Left colon (tissue), 2 donors: ENCODE measurements at regions of chr3 and their contacts with region 1.

Region 1: GRCh38 chr3:138915503-138916498 is 31.1 kb downstream of the FOXL2 start:
- DNase-seq: peak; percentile 89 to 96
- ATAC-seq: peak; percentile 85

Region 2: GRCh38 chr3:138594150-138594934 is 321.5 kb before region 1 on chr3 and contains the start of gene CEP70:
- intact Hi-C with region 1: loop called in 1 of 2 experiments (anchors 5 kb)
- DNase-seq: peak; percentile 97
- ATAC-seq: peak; percentile 87
- total RNA-seq, gene CEP70: 35.8 to 36.4 TPM

Region 3: DNA sequence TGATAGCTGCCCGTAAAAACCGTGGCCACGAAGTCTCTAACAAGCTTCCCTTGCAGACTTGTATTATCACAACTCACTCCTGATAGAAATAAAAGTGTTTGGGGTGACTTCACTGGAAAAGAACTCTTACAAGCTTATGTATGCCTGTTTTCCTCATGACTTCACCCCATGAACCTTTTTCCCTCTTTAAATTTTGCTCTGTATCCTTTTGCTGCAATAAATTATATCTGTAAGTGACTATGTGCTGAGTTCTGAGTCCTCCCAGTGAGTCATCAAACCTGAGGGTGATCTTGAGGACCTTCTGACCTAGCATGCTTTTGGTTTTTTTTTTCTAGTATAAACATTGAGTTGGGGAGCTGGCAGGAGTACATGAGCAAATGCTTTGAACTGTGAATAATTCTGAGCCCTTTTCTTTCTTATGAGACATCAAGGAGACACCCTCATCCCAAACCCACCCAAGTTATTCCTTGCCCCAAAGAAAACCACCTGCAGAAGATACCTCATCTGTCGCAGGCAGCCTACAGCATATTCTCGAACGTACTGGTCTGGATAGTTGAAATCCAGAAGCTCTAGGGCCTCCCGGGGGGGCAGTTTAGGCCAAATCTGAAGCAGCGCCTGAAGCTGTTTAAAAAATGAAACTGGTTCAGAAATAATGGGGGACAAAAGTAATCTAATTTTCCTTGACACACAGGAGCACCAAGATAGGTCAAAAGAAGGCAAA is 221.4 kb before region 1 on chr3:
- intact Hi-C with region 1: loop called (anchors 2 to 10 kb)
- DNase-seq: no peak
- ATAC-seq: peak; percentile 31

Region 4: DNA sequence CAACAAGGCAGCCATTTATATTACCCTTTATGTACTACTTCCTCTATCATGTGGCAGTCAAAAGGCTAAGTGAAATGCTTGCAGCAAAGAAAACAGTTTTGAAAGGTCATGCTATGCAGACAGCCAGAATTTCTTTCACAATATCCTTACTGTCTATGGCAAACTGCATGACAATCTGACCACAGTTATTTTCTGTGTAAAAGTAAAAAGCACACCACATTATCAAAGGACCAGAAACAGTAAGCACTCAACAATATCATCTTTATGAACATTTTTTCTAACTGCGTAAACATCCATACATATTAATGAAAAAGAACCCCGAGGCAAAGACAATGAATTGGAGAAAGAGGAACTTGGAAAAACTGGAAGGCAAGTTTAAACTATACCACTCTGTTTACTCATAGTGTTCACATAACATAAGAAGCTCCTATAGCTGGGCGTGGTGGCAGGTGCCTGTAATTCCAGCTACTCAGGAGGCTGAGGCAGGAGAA is 129.0 kb before region 1 on chr3:
- intact Hi-C with region 1: no loop called
- DNase-seq: peak in 1 of 2 donors; percentile 28
- ATAC-seq: peak; percentile 77

Region 5: DNA sequence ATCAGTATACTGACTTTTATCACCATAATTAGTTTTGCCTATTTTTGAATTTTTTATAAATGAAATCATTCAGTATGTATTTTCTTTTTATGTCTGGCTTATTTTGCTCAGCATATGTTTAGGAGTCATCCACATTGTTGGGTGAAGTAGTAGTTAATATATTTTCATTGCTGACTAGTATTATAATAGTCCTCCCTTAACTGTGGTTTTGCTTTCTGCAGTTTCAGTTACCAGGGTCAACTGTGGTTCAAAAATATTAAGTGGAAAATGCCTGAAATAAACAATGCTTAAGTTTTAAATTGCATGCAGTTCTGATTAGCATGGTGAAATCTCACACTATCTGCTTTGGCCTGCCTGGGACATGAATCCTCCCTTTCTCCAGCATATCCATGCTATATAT is 168.4 kb after region 1 on chr3:
- intact Hi-C with region 1: no loop called
- DNase-seq: no peak
- ATAC-seq: no peak